ENCODE measurements at regions of chr2 and their contacts with region 1.

Region 1: DNA sequence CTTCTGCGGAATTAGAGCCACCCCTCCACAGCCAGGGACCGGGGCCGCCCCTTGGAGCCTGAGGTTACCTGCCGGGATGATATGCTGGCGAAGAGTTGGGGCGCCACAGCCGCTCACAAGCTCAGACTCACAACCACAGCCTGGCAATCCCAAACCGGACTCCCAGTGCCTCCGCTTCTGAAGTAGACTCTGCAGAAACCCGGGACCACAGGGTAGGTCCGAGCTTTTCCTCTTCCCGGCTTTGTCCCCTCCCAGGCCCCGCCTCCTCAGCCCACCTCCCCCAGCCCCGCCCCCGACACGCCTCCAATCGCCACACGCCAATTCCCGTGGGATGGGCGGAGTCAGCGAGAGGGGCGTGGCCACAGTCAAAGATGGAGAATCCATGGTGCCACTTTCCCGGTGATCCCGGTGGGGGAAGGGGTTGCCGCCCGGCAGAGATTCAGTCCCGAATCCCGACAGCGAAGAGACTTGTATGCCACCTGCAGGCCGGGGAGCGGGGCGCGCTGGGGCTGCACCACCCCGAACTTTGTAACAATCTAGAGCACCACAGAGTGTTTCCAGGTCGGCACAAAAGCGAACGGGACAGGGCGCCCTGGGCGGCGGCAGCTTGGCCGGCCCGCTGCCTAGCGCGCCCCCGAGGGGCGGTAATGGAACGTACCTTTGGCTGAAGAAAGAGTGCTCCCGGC is at the start of gene IDH1:
- DNase-seq: peak; percentile 95
- CTCF ChIP-seq: peak; percentile 60

Region 2: GRCh38 chr2:207896525-207897295 is 358.3 kb before region 1 on chr2:
- CTCF ChIA-PET with region 1: no interaction called
- POLR2A ChIA-PET with region 1: no interaction called
- DNase-seq: no peak
- CTCF ChIP-seq: no peak

Region 3: DNA sequence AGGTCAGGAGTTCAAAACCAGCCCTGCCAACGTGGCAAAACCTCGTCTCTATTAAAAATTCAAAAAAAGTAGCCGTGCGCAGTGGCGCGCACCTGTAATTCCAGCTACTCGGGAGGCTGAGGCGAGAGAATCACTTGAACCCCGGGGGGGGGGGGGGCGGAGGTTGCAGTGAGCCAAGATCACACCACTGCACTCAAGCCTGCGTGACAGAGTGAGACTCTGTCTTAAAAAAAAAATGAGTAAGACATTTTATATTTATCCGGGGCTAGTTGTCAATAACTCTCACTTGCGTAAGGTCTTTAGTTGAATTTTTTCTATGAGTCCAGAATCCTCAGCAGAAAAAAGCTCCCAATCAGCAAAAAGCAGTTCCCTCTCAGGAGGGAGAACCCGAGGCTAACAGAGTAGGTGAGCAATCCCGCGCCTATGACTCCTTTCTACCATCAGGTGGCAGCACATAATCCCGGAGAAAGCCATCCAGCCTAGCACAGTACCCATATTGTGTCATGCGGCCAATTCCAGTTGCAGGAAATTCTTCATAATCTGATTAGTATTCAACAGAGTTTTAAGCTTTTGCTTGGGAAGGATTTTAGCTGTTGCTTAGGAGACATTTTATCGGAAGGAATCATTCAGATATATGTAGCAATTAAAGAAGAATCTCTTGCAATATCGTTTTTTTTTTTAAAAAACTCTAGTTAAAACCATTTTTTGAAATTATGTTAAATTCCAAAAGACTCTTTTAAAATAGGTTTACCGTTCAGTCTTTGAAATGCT is 79.8 kb before region 1 on chr2:
- CTCF ChIA-PET with region 1: interaction called, 39 read pairs
- POLR2A ChIA-PET with region 1: no interaction called
- DNase-seq: peak; percentile 79
- CTCF ChIP-seq: peak; percentile 86

Region 4: GRCh38 chr2:208228476-208228875 is 26.5 kb before region 1 on chr2:
- CTCF ChIA-PET with region 1: interaction called, 11 read pairs
- POLR2A ChIA-PET with region 1: no interaction called
- DNase-seq: no peak
- CTCF ChIP-seq: no peak

Region 5: DNA sequence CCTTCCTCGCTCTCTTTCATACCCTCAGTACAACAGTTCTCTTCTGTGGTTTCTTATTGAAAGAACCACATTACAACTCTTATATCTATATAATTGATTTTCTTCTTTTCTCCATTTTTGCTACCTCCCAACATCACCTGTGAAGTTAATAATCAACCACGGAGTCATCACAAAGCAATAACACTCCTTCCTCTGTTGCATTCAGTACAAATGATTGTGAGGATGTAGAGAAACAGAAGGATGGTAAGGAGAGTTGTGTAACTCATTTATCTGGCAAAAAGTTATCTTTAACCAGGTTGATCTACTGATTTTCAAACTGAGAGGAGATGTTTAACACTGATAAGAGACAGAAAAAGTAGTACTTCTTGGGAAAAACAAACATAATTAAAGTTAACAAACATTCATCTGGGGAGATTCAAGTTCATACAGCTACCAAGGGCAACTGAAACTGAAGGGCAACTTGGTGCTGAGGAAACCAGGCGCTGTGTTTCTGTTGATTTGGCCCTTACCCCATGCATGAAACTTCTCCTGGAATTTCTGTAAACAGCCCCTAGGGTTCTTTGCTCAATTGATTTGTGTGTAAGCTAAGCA is 14.3 kb before region 1 on chr2:
- CTCF ChIA-PET with region 1: interaction called, 11 read pairs
- POLR2A ChIA-PET with region 1: no interaction called
- DNase-seq: no peak
- CTCF ChIP-seq: no peak

Region 6: DNA sequence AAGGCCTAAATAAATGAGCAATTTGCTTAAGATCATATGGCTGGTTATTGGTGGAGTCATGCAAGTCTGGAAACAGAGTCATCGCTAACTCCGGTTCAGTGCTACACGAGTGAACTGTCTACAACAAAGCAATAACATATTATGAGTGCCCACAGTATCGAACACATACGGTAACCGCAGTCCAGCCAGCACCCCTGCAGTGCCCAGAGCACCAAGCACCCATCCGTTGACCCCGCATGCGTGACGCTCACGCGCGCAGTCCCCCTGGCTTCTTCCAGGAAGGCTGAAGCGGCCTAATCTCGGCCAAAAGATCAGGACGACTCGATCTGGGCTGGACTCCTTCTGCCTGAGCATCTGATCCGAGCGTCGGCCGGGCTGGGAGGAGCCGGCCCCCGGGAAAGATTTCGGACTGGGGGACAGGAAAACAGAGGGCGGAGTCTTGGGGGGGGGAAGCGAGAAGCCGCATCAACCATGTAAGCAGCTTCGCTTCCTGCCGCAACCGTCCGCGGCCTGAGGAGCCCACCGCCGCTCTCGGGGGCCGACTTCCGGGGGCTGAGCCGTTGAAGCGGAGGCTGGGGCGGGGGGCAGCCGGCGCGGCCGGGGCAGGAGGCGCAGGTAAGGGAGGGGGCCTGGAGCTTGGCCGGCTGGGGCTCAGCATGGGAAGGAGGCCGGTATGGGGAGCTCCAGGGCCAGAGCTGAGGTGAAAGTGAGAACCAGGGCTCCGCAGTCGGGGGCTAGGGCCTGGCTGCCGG is 11.0 kb after region 1 on chr2 and contains the start of gene PIKFYVE:
- CTCF ChIA-PET with region 1: interaction called, 34 read pairs
- POLR2A ChIA-PET with region 1: no interaction called
- DNase-seq: peak; percentile 96
- CTCF ChIP-seq: no peak

Region 7: GRCh38 chr2:208274748-208275147 is 19.7 kb after region 1 on chr2:
- CTCF ChIA-PET with region 1: interaction called, 12 read pairs
- POLR2A ChIA-PET with region 1: no interaction called
- DNase-seq: no peak
- CTCF ChIP-seq: no peak

Measured in GM10248 (cell line).